ENCODE measurements at regions of chr10 and their contacts with region 1.

Region 1: GRCh38 chr10:69092959-69093850 is 5.3 kb downstream of the SRGN start:
- DNase-seq: peak; percentile 70 to 88 (median 83)
- H3K4me3 ChIP-seq: no peak overlapping the region
- H3K4me3 Mint-ChIP-seq: peak overlapping the region; percentile 18 to 75 (median 52)
- H3K27ac ChIP-seq: peak overlapping the region; percentile 22
- H3K27ac Mint-ChIP-seq: peak overlapping the region; percentile 82 to 99 (median 98)
- H3K4me1 ChIP-seq: peaks cover 43% of the 10 kb centered on the region
- H3K4me1 Mint-ChIP-seq: peaks cover 59 to 73% (median 70%) of the 10 kb centered on the region in 3 donors
- H3K27me3 ChIP-seq: no peaks in the 10 kb centered on the region
- H3K27me3 Mint-ChIP-seq: peaks cover 0 to 1% of the 10 kb centered on the region in 2 donors

Region 2: DNA sequence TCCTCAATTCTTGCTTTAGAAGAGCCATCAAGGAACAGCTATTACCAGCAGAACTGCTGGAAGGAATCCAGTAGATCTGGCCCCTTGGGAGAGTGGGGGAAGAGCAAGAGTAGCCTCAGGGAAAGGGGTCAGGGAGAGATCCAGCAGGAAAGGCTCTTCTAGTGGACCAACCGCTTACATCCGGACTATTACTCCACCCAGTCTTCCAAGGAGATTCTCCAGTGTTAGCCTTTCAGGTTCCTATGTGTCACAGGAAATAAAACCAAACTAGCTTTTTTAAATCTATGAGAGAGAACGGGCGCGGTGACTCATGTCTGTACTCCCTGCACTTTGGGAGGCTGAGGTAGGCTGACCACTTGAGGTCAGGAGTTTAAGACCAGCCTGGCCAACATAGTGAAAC is 498.8 kb before region 1 on chr10:
- CTCF ChIA-PET with region 1: no interaction called
- POLR2A ChIA-PET with region 1: no interaction called
- DNase-seq: no peak
- H3K4me3 ChIP-seq: no peak overlapping the region
- H3K4me3 Mint-ChIP-seq: no peak overlapping the region
- H3K27ac ChIP-seq: no peak overlapping the region
- H3K27ac Mint-ChIP-seq: peak overlapping the region in 1 of 8 donors; percentile 66
- H3K4me1 ChIP-seq: no peaks in the 10 kb centered on the region
- H3K4me1 Mint-ChIP-seq: peaks cover 0 to under 1% (median 0%) of the 10 kb centered on the region in 3 donors
- H3K27me3 ChIP-seq: no peaks in the 10 kb centered on the region
- H3K27me3 Mint-ChIP-seq: no peaks in the 10 kb centered on the region

Region 3: DNA sequence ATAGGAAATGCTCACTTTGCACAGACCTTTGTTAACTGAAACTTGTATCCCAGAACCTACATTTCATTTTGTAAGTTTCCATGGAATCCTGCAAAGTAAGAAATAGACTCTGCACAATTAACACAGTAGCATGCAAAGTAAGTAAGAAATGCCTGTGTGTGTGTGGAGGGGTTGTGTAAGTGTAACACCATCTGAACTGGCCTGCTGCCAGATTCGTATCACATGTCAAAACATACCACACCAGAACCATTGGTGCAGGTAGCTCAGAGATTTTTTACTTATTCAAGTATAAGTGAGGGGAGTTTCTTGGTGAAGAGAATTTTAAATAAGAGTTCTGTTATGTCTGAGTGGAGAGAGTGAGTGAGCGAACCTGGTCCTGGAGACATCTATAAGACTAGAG is 155.1 kb before region 1 on chr10:
- CTCF ChIA-PET with region 1: no interaction called
- POLR2A ChIA-PET with region 1: no interaction called
- DNase-seq: no peak
- H3K4me3 ChIP-seq: no peak overlapping the region
- H3K4me3 Mint-ChIP-seq: no peak overlapping the region
- H3K27ac ChIP-seq: no peak overlapping the region
- H3K27ac Mint-ChIP-seq: peak overlapping the region in 4 of 8 donors; percentile 43 to 84 (median 62)
- H3K4me1 ChIP-seq: no peaks in the 10 kb centered on the region
- H3K4me1 Mint-ChIP-seq: peaks cover 0 to 7% (median 5%) of the 10 kb centered on the region in 3 donors
- H3K27me3 ChIP-seq: no peaks in the 10 kb centered on the region
- H3K27me3 Mint-ChIP-seq: no peaks in the 10 kb centered on the region

Region 4: GRCh38 chr10:68988530-68989316 is 104.5 kb before region 1 on chr10 and contains the start of gene KIFBP:
- CTCF ChIA-PET with region 1: interaction called, 10 read pairs
- POLR2A ChIA-PET with region 1: no interaction called
- DNase-seq: peak; percentile 66 to 87 (median 83)
- H3K4me3 ChIP-seq: peak within 1 kb of the TSS; percentile 89
- H3K4me3 Mint-ChIP-seq: peak within 1 kb of the TSS; percentile 93 to 99 (median 98)
- H3K27ac ChIP-seq: peak within 1 kb of the TSS; percentile 82
- H3K27ac Mint-ChIP-seq: peak within 1 kb of the TSS; percentile 86 to 99 (median 96)
- H3K4me1 ChIP-seq: peaks cover 19% of the 10 kb centered on the region
- H3K4me1 Mint-ChIP-seq: peaks cover 53 to 66% (median 59%) of the 10 kb centered on the region in 3 donors
- H3K27me3 ChIP-seq: no peaks in the 10 kb centered on the region
- H3K27me3 Mint-ChIP-seq: no peaks in the 10 kb centered on the region
- total RNA-seq, gene KIFBP: 19.3 to 21.0 TPM

Region 5: GRCh38 chr10:69004821-69005220 is 88.4 kb before region 1 on chr10:
- CTCF ChIA-PET with region 1: interaction called, 91 read pairs
- POLR2A ChIA-PET with region 1: interaction called, 5 read pairs
- DNase-seq: peak in 2 of 5 donors; percentile 57 to 62
- H3K4me3 ChIP-seq: no peak overlapping the region
- H3K4me3 Mint-ChIP-seq: no peak overlapping the region
- H3K27ac ChIP-seq: no peak overlapping the region
- H3K27ac Mint-ChIP-seq: peak overlapping the region in 1 of 8 donors; percentile 12
- H3K4me1 ChIP-seq: peaks cover 3% of the 10 kb centered on the region
- H3K4me1 Mint-ChIP-seq: peaks cover 3 to 5% (median 4%) of the 10 kb centered on the region in 3 donors
- H3K27me3 ChIP-seq: no peaks in the 10 kb centered on the region
- H3K27me3 Mint-ChIP-seq: no peaks in the 10 kb centered on the region

Region 6: GRCh38 chr10:69045441-69046300 is 47.5 kb before region 1 on chr10:
- CTCF ChIA-PET with region 1: interaction called, 10 read pairs
- POLR2A ChIA-PET with region 1: interaction called, 22 read pairs
- DNase-seq: peak in 3 of 5 donors; percentile 28 to 68 (median 67)
- H3K4me3 ChIP-seq: no peak overlapping the region
- H3K4me3 Mint-ChIP-seq: peak overlapping the region; percentile 5 to 83 (median 75)
- H3K27ac ChIP-seq: peak overlapping the region; percentile 45
- H3K27ac Mint-ChIP-seq: peak overlapping the region; percentile 88 to 100 (median 98)
- H3K4me1 ChIP-seq: peaks cover 40% of the 10 kb centered on the region
- H3K4me1 Mint-ChIP-seq: peaks cover 31 to 50% (median 36%) of the 10 kb centered on the region in 3 donors
- H3K27me3 ChIP-seq: no peaks in the 10 kb centered on the region
- H3K27me3 Mint-ChIP-seq: no peaks in the 10 kb centered on the region

Region 7: DNA sequence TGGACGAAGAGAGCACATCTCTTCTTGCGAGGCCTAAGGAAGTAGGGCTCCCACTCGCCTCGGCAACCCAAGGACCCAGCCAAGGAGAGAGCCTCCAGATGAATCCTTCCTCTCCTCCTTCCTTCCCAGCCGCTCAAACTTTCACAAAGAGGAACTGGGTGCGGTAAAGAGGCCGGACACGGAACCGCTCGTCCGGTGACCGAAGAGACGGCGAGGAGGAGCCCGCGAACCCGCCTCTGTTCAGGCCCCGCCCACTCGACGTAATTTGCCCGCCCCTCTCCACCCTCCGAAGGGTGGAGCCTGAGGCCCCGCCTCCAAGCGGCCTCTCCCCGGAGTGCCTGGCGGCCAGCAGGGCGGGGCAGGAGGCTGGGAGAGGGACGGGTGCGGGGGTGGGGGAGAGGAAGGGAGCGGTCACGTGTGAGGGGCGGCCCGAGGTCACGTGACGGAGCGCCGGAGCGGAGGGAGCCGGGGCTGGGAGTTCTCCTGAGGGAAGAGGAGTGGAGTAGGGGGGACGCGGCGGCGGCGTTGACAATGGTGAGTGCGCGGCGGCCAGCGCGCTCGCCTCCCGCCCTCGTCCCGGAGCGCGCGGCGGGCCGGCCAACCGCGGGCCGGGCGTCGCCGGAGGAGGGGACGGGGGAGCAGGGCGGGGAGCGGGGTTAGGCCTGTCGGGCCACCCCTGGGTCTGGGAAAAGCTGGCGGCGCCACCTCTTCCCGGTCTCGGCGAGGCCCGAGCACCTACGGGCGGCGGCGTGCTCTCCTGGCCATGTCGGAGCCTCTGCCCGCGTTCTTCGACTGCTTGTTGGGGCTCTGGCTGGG is 30.8 kb after region 1 on chr10 and contains the start of gene VPS26A:
- CTCF ChIA-PET with region 1: interaction called, 10 read pairs
- POLR2A ChIA-PET with region 1: interaction called, 4 read pairs
- DNase-seq: peak; percentile 98 to 99 (median 99)
- H3K4me3 ChIP-seq: peak within 1 kb of the TSS; percentile 88
- H3K4me3 Mint-ChIP-seq: peak within 1 kb of the TSS; percentile 91 to 98 (median 94)
- H3K27ac ChIP-seq: peak within 1 kb of the TSS; percentile 97
- H3K27ac Mint-ChIP-seq: peak within 1 kb of the TSS; percentile 88 to 98 (median 97)
- H3K4me1 ChIP-seq: peaks cover 23% of the 10 kb centered on the region
- H3K4me1 Mint-ChIP-seq: peaks cover 26 to 34% (median 30%) of the 10 kb centered on the region in 3 donors
- H3K27me3 ChIP-seq: no peaks in the 10 kb centered on the region
- H3K27me3 Mint-ChIP-seq: no peaks in the 10 kb centered on the region
- total RNA-seq, gene VPS26A: 44.8 to 46.7 TPM

Region 8: GRCh38 chr10:69217119-69217754 is 124.0 kb after region 1 on chr10:
- CTCF ChIA-PET with region 1: no interaction called
- POLR2A ChIA-PET with region 1: no interaction called
- DNase-seq: no peak
- H3K4me3 ChIP-seq: no peak overlapping the region
- H3K4me3 Mint-ChIP-seq: no peak overlapping the region
- H3K27ac ChIP-seq: peak overlapping the region; percentile 3
- H3K27ac Mint-ChIP-seq: peak overlapping the region in 1 of 8 donors; percentile 46
- H3K4me1 ChIP-seq: peaks cover 30% of the 10 kb centered on the region
- H3K4me1 Mint-ChIP-seq: peaks cover 24 to 53% (median 35%) of the 10 kb centered on the region in 3 donors
- H3K27me3 ChIP-seq: no peaks in the 10 kb centered on the region
- H3K27me3 Mint-ChIP-seq: no peaks in the 10 kb centered on the region